B cell (primary cell): ENCODE measurements at regions of chr3 and their contacts with region 1.

Region 1: DNA sequence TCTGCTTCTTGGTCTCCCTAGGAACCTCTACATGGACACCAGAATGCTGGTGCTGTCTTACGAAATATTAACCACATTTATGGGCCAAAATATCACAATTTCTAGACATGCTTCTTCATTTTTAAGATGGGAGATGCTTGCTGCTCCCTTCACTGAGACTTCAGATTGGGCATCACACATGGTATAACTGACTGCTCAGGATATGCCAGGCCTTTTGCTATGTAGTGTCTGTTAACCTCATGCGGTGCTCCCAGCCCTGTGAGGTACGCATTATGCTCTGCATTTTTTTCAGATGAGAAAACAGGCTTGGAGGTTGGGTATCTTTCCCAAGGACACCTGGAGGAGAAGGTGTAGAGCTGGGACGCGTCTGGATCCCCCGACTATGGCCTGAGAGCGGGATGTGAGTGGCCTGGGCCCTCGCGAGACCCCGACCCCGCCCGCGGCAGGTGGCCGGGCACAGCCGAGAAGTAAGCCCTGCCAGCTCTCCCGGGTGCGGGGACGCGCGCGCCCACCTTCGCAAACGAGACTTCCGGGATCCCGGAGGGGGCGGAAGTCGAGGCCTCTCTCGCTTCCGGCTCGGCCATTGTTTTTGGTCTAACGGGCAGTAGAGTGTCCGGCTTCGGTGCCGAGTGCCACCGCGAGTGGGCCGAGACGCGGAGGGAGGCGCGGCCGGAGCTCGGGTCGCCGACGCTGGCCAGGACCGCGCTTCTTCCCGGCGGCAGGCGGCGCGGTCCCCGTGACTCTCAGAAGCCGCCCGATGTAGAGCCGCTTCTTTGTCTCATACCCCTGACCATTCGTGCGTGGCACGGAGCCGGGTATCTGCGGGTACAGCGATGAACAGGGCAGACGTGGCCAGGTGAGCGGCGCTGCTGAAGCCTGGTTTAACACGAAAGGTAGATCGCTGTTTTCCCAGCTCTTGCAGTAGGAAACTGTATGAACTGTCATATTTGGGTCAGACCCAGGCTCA is at the start of gene ZKSCAN7:
- DNase-seq: peak; percentile 74
- ATAC-seq: peak; percentile 74
- H3K4me3 ChIP-seq: peak within 1 kb of the TSS; percentile 49 to 91 (median 79)
- H3K4me3 Mint-ChIP-seq: peak within 1 kb of the TSS; percentile 90
- H3K27ac ChIP-seq: peak within 1 kb of the TSS; percentile 40 to 79
- H3K27ac Mint-ChIP-seq: peak within 1 kb of the TSS; percentile 83
- H3K4me1 ChIP-seq: peaks cover 13 to 16% of the 10 kb centered on the region in 2 donors
- H3K4me1 Mint-ChIP-seq: peaks cover 24% of the 10 kb centered on the region
- H3K27me3 ChIP-seq: peaks cover 0 to 2% (median 0%) of the 10 kb centered on the region in 4 experiments
- H3K27me3 Mint-ChIP-seq: peaks cover 7% of the 10 kb centered on the region
- CTCF ChIP-seq: peak; percentile 10
- total RNA-seq, gene ZKSCAN7: 8.0 and 8.5 TPM in 2 replicates

Region 2: DNA sequence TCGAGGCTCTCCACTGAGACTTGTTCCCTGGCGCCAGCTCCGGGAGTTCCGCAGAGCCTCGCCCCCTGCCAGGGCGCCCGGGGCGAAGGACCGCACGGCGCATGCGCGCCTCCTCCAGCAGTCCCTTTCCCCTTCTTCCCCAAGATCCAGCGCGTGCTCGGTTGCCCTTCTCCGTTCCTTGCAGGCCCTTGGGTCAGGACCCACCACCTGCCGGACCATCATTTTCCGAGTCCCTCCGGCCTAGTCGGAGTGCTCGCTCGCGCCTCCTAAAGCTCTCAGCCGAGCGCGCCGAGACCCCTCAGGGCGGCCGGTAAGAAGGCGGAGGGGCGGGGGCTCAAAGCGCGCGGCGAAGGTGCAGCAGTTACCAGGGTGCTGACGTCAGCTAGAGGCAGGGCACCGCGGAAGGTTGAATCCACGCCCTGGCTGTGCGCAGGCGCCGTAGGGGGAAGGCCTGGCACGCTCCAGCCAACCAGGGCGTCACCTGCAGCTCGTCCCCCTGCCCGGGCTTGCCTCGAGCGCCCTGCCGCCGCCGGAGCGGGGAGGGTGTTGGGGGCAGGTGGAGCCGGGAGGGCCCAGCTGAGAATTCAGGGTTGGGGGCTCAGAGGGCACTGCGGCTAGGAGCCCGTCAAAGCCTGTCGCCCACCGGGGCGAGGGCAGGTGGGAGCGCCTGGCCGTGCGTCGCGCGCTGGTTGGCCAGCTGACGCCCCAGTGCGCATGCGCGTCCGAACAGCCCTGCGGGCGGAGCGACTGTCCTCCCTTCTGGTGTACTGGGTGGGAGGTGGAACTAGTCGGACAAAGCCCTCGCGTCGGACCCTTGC is 216.7 kb before region 1 on chr3 and contains the start of gene TCAIM:
- CTCF ChIA-PET with region 1: no interaction called
- POLR2A ChIA-PET with region 1: no interaction called
- intact Hi-C with region 1: loop called (anchors 1 kb)
- DNase-seq: peak; percentile 100
- ATAC-seq: peak; percentile 90
- H3K4me3 ChIP-seq: peak within 1 kb of the TSS; percentile 85 to 97 (median 87)
- H3K4me3 Mint-ChIP-seq: peak within 1 kb of the TSS; percentile 99
- H3K27ac ChIP-seq: peak within 1 kb of the TSS; percentile 80 to 88
- H3K27ac Mint-ChIP-seq: peak within 1 kb of the TSS; percentile 99
- H3K4me1 ChIP-seq: peaks cover 16 to 19% of the 10 kb centered on the region in 2 donors
- H3K4me1 Mint-ChIP-seq: peaks cover 29% of the 10 kb centered on the region
- H3K27me3 ChIP-seq: no peaks in the 10 kb centered on the region
- H3K27me3 Mint-ChIP-seq: peaks cover 9% of the 10 kb centered on the region
- CTCF ChIP-seq: no peak
- total RNA-seq, gene TCAIM: 15.8 and 16.7 TPM in 2 replicates

Region 3: DNA sequence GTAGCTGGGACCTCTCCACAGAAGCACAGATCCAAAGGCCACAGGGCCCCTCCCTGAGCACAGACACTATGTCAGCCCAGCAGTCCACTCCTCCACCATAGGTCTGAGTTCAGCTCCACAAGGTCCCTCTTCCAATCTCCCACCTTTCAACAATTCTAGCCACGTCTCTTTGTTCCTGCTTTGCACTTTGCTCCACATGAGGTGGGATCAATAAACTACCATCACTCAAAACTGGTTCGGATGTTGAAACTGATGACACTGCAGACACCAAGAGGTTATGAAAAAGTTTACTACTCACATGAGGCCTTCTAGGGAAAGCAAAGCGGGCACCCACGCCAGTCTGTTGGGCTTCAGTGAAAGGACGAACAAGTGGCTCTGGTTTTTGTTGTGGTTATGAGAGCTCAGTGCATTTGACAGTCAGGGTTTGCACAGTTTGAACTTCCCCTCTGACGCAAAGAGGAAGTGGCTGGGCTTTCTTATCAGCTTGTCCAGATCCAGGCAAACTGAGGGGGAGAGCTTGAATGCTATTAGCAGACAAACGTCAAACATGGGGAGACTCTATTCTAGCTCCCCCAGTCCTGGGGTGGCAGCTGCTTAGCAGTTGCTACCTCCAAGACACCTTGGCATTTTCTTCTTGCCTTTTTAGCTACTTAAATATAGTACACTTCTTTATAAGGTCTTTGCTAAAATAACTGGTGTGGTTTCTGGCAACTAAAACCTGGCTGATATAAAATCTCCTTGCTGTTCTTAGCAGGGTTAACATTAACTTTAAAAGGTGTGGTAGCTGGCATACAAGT is 115.2 kb before region 1 on chr3:
- CTCF ChIA-PET with region 1: no interaction called
- POLR2A ChIA-PET with region 1: no interaction called
- intact Hi-C with region 1: no loop called
- DNase-seq: peak; percentile 82
- ATAC-seq: peak; percentile 92
- H3K4me3 ChIP-seq: peak overlapping the region in 2 of 5 experiments; percentile 39 to 48
- H3K4me3 Mint-ChIP-seq: peak overlapping the region; percentile 68
- H3K27ac ChIP-seq: peak overlapping the region; percentile 62 to 84
- H3K27ac Mint-ChIP-seq: peak overlapping the region; percentile 83
- H3K4me1 ChIP-seq: peaks cover 17 to 20% of the 10 kb centered on the region in 2 donors
- H3K4me1 Mint-ChIP-seq: peaks cover 20% of the 10 kb centered on the region
- H3K27me3 ChIP-seq: no peaks in the 10 kb centered on the region
- H3K27me3 Mint-ChIP-seq: no peaks in the 10 kb centered on the region
- CTCF ChIP-seq: no peak

Region 4: DNA sequence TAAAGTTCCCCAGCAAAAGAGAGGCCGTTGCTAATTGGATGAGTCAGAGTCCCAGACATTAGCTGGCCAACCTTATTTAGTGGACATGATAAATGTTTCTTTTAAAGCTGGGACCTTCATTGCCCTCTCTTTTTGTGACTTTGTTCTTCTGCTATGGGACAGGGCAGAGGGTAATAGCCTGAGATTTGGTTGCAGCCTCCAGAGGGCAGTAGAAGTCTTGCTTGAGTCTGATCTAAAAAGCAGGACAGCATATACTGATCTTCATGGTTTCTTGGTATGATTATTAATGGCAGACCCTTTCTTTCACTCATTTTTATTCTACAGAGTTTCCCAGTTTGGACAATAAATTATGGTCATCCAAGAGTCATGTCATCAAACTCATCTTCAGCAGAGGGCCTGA is 25.0 kb before region 1 on chr3:
- CTCF ChIA-PET with region 1: interaction called, 6 read pairs
- POLR2A ChIA-PET with region 1: no interaction called
- intact Hi-C with region 1: loop called (anchors 2 kb)
- DNase-seq: no peak
- ATAC-seq: no peak
- H3K4me3 ChIP-seq: no peak overlapping the region
- H3K4me3 Mint-ChIP-seq: no peak overlapping the region
- H3K27ac ChIP-seq: no peak overlapping the region
- H3K27ac Mint-ChIP-seq: no peak overlapping the region
- H3K4me1 ChIP-seq: no peaks in the 10 kb centered on the region
- H3K4me1 Mint-ChIP-seq: no peaks in the 10 kb centered on the region
- H3K27me3 ChIP-seq: peaks cover 0 to 16% (median 2%) of the 10 kb centered on the region in 4 experiments
- H3K27me3 Mint-ChIP-seq: peaks cover 28% of the 10 kb centered on the region
- CTCF ChIP-seq: no peak

Region 5: DNA sequence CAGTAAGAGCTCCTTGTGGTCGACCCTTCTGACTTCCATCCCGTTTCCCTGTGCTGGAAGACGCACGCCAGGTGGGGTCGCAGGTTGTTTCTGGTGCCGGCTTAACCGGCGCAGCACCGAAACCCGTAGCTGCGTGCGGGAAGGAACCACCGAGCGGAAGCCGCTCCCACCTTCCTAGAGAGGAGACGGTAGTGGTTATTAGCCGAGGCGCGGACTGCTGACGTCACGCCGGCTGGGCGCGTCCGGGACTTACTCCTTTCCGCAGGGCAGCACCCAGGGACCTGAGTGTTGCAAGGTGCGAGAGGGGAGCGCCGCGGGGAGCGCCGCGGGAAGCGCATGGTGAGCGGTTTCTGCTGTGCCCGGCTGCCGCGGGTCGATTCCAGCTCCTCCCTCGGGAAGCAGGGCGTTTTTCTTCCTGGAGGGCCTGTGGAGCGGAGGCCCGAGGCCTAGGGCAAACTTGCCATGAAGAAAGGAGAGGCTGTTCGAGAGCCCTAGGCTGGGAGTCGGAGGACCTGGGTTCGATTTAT is 174.5 kb after region 1 on chr3 and contains the start of gene ZNF501:
- CTCF ChIA-PET with region 1: no interaction called
- POLR2A ChIA-PET with region 1: interaction called, 3 read pairs
- intact Hi-C with region 1: loop called (anchors 10 kb)
- DNase-seq: peak; percentile 90
- ATAC-seq: peak; percentile 94
- H3K4me3 ChIP-seq: peak within 1 kb of the TSS; percentile 35 to 89 (median 77)
- H3K4me3 Mint-ChIP-seq: peak within 1 kb of the TSS; percentile 96
- H3K27ac ChIP-seq: peak within 1 kb of the TSS; percentile 15 to 32
- H3K27ac Mint-ChIP-seq: peak within 1 kb of the TSS; percentile 86
- H3K4me1 ChIP-seq: peaks cover 6 to 12% of the 10 kb centered on the region in 2 donors
- H3K4me1 Mint-ChIP-seq: peaks cover 13% of the 10 kb centered on the region
- H3K27me3 ChIP-seq: no peaks in the 10 kb centered on the region
- H3K27me3 Mint-ChIP-seq: no peaks in the 10 kb centered on the region
- CTCF ChIP-seq: no peak
- total RNA-seq, gene ZNF501: 6.1 and 7.2 TPM in 2 replicates